Head of caudate nucleus (tissue), 42 donors: ENCODE measurements at regions of chr1 and their contacts with region 1.

Region 1: DNA sequence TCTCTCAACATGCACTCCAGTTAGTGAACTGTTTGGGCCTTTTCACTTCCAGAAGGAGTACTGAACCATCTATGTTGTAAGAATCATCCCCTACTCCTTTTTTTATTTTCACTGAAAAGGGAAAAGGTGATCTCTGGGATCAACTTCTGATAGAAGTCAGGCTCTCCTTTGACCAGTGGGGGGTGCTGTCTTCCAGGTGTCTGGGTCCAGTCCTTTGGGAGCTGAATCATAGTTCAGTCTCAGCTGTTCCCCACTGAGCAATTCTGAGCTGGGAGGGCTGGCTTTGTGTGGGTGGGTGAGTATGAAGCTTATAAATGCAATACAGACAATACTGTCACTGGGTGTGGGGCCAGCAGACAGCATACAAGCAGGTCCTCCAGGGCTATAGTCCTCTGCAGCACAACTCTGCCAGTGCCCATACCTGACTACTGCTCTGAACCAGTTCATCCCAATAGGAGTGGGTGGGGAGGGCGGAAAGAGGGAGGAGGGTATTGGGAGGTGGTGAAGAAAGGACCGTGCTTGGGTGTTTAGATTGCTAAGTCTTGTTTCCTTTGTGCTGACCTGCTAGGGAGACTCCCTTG is 12.5 kb upstream of the SARS1 start:
- DNase-seq: peak; percentile 54 to 94 (median 82)

Region 2: DNA sequence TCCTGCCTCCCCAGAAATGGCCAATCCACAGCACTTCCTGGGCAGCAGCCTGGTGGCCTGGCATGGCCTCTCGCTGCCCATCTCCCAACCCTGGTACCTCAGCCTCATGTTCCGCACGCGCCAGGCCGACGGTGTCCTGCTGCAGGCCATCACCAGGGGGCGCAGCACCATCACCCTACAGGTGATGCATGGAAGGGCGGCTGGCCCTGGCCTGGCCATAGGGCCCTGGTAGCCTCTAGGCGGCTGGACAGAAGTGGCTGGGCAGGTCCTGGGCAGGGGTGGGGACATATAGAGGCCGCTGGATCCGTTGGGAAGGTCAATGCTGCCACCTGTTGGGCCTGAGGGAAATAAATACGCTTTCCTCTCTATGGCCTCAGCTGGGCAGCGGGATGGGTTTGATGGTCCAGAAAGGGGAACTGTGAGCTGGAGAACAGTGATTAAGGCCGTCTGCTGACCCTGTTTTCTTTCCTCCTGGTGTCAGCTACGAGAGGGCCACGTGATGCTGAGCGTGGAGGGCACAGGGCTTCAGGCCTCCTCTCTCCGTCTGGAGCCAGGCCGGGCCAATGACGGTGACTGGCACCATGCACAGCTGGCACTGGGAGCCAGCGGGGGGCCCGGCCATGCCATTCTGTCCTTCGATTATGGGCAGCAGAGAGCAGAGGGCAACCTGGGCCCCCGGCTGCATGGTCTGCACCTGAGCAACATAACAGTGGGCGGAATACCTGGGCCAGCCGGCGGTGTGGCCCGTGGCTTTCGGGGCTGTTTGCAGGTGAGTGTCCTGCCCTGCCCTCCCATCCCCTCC is 62.6 kb after region 1 on chr1:
- intact Hi-C with region 1: loop called (anchors 5 kb)
- DNase-seq: peak; percentile 63 to 94 (median 84)